A549 (cell line): ENCODE measurements at regions of chr11 and their contacts with region 1.

Region 1: GRCh38 chr11:46916286-46917108 is 1.9 kb downstream of the LRP4 start:
- DNase-seq: peak; percentile 66 to 94
- ATAC-seq: peak; percentile 69 to 85
- H3K4me3 ChIP-seq: peak overlapping the region; percentile 55
- H3K27ac ChIP-seq: peak overlapping the region; percentile 68 to 85
- H3K4me1 ChIP-seq: peaks cover 21% of the 10 kb centered on the region
- CTCF ChIP-seq: no peak; the same call in 2 of the 3 replicates
- EP300 ChIP-seq: no peak
- POLR2A ChIP-seq: no peak
- RAD21 ChIP-seq: peak in 1 of 2 experiments; percentile 17; a peak in 2 of 5 replicates

Region 2: GRCh38 chr11:46896719-46897406 is 19.6 kb before region 1 on chr11:
- CTCF ChIA-PET with region 1: interaction called, 10 read pairs
- POLR2A ChIA-PET with region 1: no interaction called
- DNase-seq: peak; percentile 58 to 68
- ATAC-seq: peak; percentile 69 to 84; a peak in 5 of 6 replicates
- H3K4me3 ChIP-seq: no peak overlapping the region
- H3K27ac ChIP-seq: no peak overlapping the region
- H3K4me1 ChIP-seq: no peaks in the 10 kb centered on the region
- CTCF ChIP-seq: peak; percentile 54
- EP300 ChIP-seq: no peak
- POLR2A ChIP-seq: no peak
- RAD21 ChIP-seq: 0 out of 5 replicates have a peak, but pooled peaks of 1 of the 2 experiments have one; percentile 14

Region 3: DNA sequence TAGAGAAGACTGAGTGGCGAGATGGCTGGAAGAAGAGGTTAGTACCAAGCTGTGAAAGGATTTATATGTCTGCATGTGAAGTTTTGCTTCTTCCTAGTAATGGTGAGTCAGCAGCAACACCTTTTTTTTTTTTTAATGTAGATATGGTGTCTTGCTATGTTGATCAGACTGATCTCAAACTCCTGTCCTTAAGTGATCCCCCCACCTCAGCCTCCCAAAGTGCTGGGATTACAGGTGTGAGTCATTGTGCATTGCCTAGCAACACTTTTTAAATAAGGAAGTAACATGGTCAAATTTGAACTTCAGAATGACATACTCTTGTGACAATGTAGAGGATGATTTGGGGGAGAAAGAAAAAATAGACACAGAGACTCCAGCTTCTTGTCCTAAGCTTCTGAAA is 13.6 kb after region 1 on chr11:
- CTCF ChIA-PET with region 1: interaction called, 17 read pairs
- POLR2A ChIA-PET with region 1: no interaction called
- DNase-seq: peak; percentile 50 to 91
- ATAC-seq: peak; percentile 85 to 91
- H3K4me3 ChIP-seq: no peak overlapping the region
- H3K27ac ChIP-seq: peak overlapping the region; percentile 79 to 86
- H3K4me1 ChIP-seq: peaks cover 16% of the 10 kb centered on the region
- CTCF ChIP-seq: no peak
- EP300 ChIP-seq: no peak
- POLR2A ChIP-seq: no peak
- RAD21 ChIP-seq: no peak